ENCODE measurements at regions of chr13 and their contacts with region 1.

Region 1: DNA sequence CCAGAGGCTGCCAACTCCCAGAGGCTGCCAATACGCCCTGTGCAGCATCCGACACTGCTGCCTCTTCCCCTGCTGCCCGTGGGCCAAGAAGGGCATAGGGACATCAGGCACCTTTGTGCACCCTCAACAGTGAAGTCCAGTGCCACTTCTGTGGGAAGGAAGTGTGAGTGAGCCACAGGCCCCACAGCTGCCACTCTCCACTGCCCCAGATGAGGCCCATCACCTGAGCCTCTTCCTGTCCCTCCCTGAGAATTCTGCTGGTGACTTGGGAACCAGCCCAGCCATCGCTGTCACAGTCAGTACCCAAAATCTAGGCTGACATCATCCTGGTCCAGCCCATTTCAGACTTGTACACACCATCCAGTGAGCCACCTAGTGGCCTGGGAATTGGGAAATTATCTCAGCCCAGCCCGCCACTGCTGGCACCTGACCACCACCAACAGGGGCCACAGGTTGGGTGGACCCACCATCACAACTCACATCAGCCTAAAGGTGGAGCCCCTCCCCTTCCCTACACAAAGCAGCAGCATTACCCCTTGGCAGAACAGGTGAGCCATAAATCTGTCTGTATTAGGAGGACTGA is 733.9 kb upstream of the KLHL1 start:
- DNase-seq: peak; percentile 32 to 36
- H3K4me3 ChIP-seq: no peak overlapping the region
- H3K4me3 Mint-ChIP-seq: no peak overlapping the region
- H3K27ac Mint-ChIP-seq: no peak overlapping the region
- H3K4me1 ChIP-seq: no peaks in the 10 kb centered on the region
- H3K4me1 Mint-ChIP-seq: no peaks in the 10 kb centered on the region
- H3K27me3 ChIP-seq: no peaks in the 10 kb centered on the region
- H3K27me3 Mint-ChIP-seq: peaks cover 9% of the 10 kb centered on the region
- CTCF ChIP-seq: peak; percentile 16 to 21

Region 2: DNA sequence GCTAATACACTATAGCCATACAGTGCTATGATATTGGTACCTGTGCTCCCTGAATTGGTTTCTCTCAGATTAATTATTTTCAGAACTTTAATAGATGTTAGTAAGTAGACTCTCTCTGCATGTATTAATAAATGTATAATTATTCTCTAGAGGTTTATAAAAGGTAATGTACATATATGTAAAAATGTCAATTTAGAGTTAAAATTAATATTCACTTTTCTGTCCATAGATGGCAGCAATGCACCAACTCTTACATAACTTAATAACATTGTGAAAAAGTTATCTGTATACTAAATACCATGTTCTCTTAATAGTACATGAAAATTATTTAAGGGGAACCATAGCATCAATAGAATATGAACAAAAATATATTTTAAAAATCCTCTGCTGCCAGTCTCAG is 218.9 kb before region 1 on chr13:
- CTCF ChIA-PET with region 1: no interaction called
- POLR2A ChIA-PET with region 1: no interaction called
- intact Hi-C with region 1: loop called (anchors 2 kb)
- DNase-seq: no peak
- H3K4me3 ChIP-seq: no peak overlapping the region
- H3K4me3 Mint-ChIP-seq: no peak overlapping the region
- H3K27ac Mint-ChIP-seq: no peak overlapping the region
- H3K4me1 ChIP-seq: no peaks in the 10 kb centered on the region
- H3K4me1 Mint-ChIP-seq: no peaks in the 10 kb centered on the region
- H3K27me3 ChIP-seq: no peaks in the 10 kb centered on the region
- H3K27me3 Mint-ChIP-seq: no peaks in the 10 kb centered on the region
- CTCF ChIP-seq: peak; percentile 28 to 32

Region 3: DNA sequence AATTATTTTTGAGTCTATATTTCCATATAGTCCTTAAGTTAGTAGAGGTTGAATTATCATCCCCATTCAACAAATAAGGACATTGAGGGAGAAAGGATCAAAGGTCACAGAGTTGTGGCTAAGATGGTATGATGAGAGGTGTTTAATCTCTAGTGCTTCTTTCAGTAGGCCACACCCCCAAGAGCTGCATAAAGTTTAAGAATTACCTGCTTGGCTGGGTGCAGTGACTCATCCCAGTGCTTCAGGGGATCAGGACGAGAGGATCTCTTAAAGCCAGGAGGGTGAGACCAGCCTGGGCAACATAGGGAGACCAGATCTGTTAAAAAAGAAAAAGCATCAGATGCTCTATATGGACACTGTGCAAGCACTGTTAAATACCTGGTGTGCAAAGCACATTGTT is 173.9 kb before region 1 on chr13:
- CTCF ChIA-PET with region 1: no interaction called
- POLR2A ChIA-PET with region 1: no interaction called
- intact Hi-C with region 1: no loop called
- DNase-seq: peak; percentile 23 to 50
- H3K4me3 ChIP-seq: no peak overlapping the region
- H3K4me3 Mint-ChIP-seq: no peak overlapping the region
- H3K27ac Mint-ChIP-seq: no peak overlapping the region
- H3K4me1 ChIP-seq: no peaks in the 10 kb centered on the region; the same call in 1 of the 2 replicates
- H3K4me1 Mint-ChIP-seq: peaks cover 8% of the 10 kb centered on the region
- H3K27me3 ChIP-seq: no peaks in the 10 kb centered on the region
- H3K27me3 Mint-ChIP-seq: no peaks in the 10 kb centered on the region
- CTCF ChIP-seq: no peak

Region 4: DNA sequence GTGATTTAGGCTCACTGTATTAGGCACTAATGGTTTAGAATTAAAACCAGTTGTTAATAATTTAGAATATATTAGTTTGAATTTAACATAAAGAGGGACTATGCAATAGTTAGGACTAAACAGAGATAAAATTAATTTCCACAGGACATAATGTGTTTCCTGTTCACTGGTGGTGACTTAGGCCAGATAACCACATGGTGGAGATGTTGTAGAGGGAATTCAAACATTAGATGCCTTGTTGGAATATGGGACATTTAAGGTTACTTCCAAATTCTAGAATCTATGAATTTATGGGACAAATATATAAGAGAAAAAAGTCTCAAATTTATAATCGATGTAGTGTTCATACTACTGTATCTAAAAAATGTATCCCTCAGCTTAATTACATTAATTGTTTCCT is 118.4 kb before region 1 on chr13:
- CTCF ChIA-PET with region 1: no interaction called
- POLR2A ChIA-PET with region 1: no interaction called
- intact Hi-C with region 1: loop called (anchors 2 kb)
- DNase-seq: no peak
- H3K4me3 ChIP-seq: no peak overlapping the region
- H3K4me3 Mint-ChIP-seq: no peak overlapping the region
- H3K27ac Mint-ChIP-seq: no peak overlapping the region
- H3K4me1 ChIP-seq: no peaks in the 10 kb centered on the region
- H3K4me1 Mint-ChIP-seq: no peaks in the 10 kb centered on the region
- H3K27me3 ChIP-seq: no peaks in the 10 kb centered on the region
- H3K27me3 Mint-ChIP-seq: no peaks in the 10 kb centered on the region
- CTCF ChIP-seq: peak; percentile 11 to 20

Region 5: DNA sequence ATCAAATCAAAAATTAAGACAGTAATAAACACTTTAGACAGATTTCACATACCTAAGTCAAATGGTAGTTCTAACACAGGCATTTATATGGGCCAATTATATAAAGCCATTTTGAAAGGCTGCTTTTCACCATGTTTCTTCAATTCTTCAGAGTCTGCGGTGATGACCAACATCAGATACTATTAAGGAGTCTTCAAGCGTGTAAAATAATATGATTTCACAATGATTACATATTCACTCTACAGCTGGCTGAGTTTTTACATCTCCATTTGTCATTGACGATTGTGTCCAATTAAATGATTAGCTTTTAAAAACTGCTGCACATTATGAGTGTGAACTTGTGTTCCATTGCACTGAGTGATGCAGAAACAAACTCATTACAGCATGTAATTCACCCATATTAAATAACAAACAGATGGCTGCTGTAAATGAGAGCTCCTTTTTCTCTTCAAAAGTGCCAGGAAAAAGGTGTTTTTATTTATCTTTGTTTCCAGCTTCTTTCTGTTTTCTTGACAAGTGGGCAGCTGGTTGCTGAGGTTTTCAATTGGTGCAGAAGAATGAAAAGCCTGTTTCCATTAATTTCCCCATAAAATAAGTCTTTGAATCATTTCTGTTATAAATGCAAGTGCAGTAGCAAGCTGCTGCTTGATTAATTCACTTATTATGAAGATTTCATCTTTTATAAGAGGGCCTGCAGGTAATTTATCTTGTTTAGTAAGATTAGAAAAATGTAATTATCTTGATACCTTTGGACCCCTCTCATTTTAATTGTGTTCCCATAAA is 57.8 kb before region 1 on chr13:
- CTCF ChIA-PET with region 1: no interaction called
- POLR2A ChIA-PET with region 1: no interaction called
- intact Hi-C with region 1: no loop called
- DNase-seq: no peak
- H3K4me3 ChIP-seq: no peak overlapping the region
- H3K4me3 Mint-ChIP-seq: no peak overlapping the region
- H3K27ac Mint-ChIP-seq: no peak overlapping the region
- H3K4me1 ChIP-seq: no peaks in the 10 kb centered on the region
- H3K4me1 Mint-ChIP-seq: peaks cover 8% of the 10 kb centered on the region
- H3K27me3 ChIP-seq: no peaks in the 10 kb centered on the region
- H3K27me3 Mint-ChIP-seq: no peaks in the 10 kb centered on the region
- CTCF ChIP-seq: no peak

Region 6: DNA sequence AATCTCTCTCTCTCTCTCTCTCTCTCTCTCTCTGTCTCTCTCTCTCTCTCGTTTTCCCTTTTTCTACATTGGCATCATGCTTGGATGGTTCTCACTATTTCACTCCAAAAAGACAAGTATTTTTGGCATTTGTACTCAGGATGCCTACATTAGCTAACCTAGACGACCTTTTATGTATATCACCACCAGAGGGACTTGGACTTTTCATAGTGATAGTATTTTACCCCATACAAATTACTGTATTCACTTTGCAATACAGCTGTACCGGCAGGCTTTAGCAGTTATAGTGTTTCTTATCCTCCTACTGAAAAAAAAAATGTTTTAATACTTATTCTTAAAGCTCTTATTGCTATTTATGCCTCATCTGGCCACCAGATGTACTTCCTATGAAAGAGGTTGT is 46.7 kb before region 1 on chr13:
- CTCF ChIA-PET with region 1: no interaction called
- POLR2A ChIA-PET with region 1: no interaction called
- intact Hi-C with region 1: no loop called
- DNase-seq: no peak
- H3K4me3 ChIP-seq: no peak overlapping the region
- H3K4me3 Mint-ChIP-seq: no peak overlapping the region
- H3K27ac Mint-ChIP-seq: no peak overlapping the region
- H3K4me1 ChIP-seq: no peaks in the 10 kb centered on the region
- H3K4me1 Mint-ChIP-seq: no peaks in the 10 kb centered on the region
- H3K27me3 ChIP-seq: no peaks in the 10 kb centered on the region
- H3K27me3 Mint-ChIP-seq: no peaks in the 10 kb centered on the region
- CTCF ChIP-seq: peak in 1 of 2 experiments; percentile 29

Region 7: DNA sequence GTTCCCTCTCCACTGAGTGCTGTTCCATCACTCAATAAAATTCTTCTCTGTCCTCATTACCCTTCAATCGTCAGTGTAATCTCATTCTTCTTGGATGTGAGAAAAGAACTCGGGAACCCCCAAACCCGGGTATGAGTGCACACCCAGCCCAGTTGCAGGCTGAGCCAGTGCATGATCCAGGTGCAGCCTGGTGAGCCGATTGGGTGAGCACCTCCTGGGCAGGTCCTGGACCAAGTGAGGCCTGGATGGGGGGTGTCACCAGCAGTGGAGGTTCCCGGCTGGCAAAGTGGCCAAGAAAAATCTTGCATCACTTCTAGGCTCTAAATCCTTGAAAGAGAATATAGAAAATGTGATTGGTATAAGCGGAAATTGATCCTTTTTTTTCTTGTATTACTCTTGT is 144.9 kb after region 1 on chr13:
- CTCF ChIA-PET with region 1: no interaction called
- POLR2A ChIA-PET with region 1: no interaction called
- intact Hi-C with region 1: no loop called
- DNase-seq: no peak
- H3K4me3 ChIP-seq: no peak overlapping the region
- H3K4me3 Mint-ChIP-seq: no peak overlapping the region
- H3K27ac Mint-ChIP-seq: no peak overlapping the region
- H3K4me1 ChIP-seq: no peaks in the 10 kb centered on the region
- H3K4me1 Mint-ChIP-seq: no peaks in the 10 kb centered on the region
- H3K27me3 ChIP-seq: no peaks in the 10 kb centered on the region
- H3K27me3 Mint-ChIP-seq: no peaks in the 10 kb centered on the region
- CTCF ChIP-seq: no peak

Measured in Caco-2 (cell line).